Upper lobe of right lung (tissue), 1 donor: ENCODE measurements at regions of chr19 and their contacts with region 1.

Region 1: DNA sequence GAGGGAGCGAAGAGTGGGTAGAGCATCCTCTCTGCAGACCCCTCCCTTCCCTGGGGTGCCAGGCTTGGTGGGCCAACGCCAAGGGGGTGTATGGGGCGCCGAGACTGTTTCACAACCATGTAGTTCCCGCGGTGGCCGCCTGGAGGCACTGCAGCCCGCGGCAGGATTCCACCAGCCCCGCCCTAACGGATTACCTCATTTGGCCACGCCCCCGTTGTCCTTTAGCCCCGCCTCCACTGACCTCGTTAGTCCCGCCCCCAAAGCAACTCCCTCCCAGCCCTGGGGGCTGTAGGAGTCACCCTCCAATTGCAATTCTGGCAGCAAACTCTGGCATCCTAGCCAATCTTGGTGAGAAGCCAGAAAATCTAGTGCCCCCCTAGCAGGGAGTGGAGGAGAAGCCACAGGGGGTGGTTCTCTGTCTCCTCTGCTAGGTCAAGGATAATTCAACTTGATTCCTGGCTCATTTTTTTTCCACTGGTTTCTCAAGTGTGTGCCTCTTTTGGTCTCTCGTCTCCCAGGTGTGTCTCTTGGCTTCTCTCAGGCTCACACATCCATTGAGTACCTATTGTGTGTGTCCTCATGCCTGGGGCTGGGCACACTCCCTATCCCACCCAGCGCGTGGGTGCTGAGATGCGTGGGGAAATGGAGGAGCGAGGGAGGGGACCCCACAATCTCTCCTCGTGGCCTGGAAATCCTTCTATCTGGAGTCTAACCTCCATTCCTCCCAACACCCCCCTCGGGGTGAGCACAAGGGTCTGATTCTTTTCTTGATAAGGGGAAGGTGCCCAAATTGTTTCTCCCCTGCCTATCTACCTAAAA is 2.0 kb downstream of the OLFM2 start:
- DNase-seq: peak; percentile 82
- ATAC-seq: peak; percentile 90
- H3K4me3 ChIP-seq: peak overlapping the region; percentile 34
- H3K27ac ChIP-seq: no peak overlapping the region
- H3K4me1 ChIP-seq: peaks cover 14% of the 10 kb centered on the region
- H3K27me3 ChIP-seq: peaks cover 33% of the 10 kb centered on the region
- CTCF ChIP-seq: peak; percentile 83

Region 2: DNA sequence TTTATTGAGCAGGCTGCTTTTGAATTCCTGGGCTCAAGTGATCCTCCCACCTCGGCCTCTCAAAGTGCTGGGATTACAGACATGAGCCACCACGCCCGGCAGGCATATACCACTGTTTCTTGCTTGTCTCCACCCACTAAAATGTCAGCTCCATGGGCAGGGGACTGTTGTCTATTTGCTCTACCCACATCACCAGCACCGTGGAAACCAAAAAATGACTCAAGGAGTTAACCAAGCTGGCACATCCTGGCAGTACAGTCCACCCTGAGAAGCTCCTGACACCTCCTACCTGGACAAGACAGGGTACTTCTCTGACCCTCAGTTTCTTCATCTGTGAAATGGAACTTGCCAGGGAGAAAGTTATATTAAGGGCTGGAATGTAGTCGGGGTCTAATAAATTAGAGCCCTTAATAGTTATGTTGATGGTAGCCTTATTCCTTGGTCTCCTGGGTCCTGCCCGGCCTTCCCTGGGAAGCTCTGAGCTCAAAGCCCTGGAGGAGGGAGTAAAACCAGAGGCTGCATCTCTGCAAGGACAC is 92.9 kb after region 1 on chr19:
- intact Hi-C with region 1: loop called (anchors 2 kb)
- DNase-seq: no peak
- ATAC-seq: no peak
- H3K4me3 ChIP-seq: no peak overlapping the region
- H3K27ac ChIP-seq: no peak overlapping the region
- H3K4me1 ChIP-seq: peaks cover 5% of the 10 kb centered on the region
- H3K27me3 ChIP-seq: peaks cover 15% of the 10 kb centered on the region
- CTCF ChIP-seq: no peak